Activated CD4-positive, alpha-beta T cell treated with anti-CD3 and anti-CD28 coated beads, Interleukin-2, amount 10 ng/mL, durations not matched to agents 24 days and 14 days (primary cell): ENCODE measurements at regions of chr4 and their contacts with region 1.

Region 1: DNA sequence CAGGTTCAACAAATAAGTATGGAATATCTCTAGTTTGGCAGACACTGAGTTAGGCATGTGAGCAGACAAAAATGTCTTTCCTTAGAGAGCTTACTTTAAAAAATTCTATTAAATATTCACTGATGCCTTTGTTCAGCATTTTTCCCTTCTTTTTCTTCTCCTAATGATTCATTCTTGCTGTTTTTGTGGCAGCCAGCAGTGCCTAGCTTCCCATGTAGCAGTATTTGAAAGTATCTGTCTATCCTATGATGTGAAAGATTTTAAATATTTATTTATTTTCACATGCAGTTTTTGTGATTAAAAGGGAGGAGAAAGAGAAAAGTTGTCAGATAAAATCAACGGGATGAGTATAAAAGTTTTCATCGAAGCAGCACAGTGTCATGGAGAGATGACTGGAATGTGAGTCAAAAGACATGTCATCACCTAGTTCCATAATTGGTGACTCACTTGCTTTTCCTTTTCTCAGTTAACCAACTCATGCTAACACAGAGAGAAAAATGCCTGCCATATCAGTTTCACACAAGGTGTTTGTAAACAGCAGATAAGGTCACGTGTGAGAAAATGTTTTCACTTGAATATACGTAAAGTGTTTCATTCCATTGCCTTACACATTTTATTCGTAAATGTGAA is 69.8 kb downstream of the BMPR1B start:
- DNase-seq: no peak
- H3K4me3 Mint-ChIP-seq: no peak overlapping the region
- H3K27ac Mint-ChIP-seq: no peak overlapping the region
- H3K4me1 Mint-ChIP-seq: no peaks in the 10 kb centered on the region
- H3K27me3 Mint-ChIP-seq: peaks cover 2% of the 10 kb centered on the region

Region 2: GRCh38 chr4:94516067-94516466 is 311.5 kb before region 1 on chr4:
- intact Hi-C with region 1: loop called (anchors 10 kb)
- DNase-seq: no peak
- H3K4me3 Mint-ChIP-seq: no peak overlapping the region
- H3K27ac Mint-ChIP-seq: no peak overlapping the region
- H3K4me1 Mint-ChIP-seq: no peaks in the 10 kb centered on the region
- H3K27me3 Mint-ChIP-seq: no peaks in the 10 kb centered on the region

Region 3: DNA sequence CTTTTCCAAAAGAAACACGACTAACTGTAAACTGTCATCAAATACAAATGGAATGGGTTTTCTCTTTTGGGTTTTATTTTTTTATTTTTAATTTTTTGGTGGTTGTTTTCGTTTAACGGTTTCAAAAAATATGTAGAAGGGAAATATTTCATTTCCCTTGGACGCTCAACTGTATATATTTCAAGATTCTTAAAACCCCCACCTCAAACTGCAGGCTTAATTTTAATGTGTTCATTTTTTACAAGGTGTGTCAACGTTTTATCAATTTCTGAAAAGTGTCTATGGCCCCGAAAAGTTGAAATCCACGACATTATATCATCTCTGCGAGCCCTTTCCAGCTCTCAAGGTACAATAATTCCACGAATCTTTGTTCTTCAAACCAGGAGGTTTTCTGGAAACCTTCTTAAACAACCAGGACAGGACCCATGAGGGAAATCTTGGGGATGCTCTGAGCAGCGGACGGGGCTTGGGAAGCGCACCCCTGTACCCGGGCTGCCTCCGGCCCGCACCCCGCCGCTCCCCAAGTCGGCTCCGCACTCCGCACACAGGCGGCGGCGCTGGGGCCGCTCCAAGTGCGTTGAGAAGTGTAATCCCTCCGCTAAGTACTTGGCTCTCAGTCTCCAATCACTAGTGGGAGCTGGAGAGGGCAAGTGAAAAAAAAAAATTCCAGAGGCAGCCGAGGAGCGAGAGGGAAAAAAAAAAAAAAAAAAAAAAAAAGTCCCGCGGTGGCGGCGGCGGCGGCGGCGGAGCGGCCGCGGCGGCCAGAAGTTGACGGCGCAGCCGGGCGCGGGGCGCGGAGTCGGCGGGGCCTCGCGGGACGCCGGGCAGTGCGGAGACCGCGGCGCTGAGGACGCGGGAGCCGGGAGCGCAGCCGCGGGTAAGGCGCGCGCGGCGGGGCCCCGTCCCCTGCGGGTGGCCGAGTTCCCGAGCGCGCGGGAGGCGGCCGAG is 70.1 kb before region 1 on chr4 and contains the start of gene BMPR1B:
- intact Hi-C with region 1: no loop called
- DNase-seq: no peak
- H3K4me3 Mint-ChIP-seq: peak within 1 kb of the TSS; percentile 75
- H3K27ac Mint-ChIP-seq: peak within 1 kb of the TSS; percentile 62
- H3K4me1 Mint-ChIP-seq: peaks cover 4% of the 10 kb centered on the region
- H3K27me3 Mint-ChIP-seq: peaks cover 70% of the 10 kb centered on the region
- total RNA-seq, gene BMPR1B: not detected in 2 replicates